ENCODE measurements at regions of chr11 and their contacts with region 1.

Region 1: DNA sequence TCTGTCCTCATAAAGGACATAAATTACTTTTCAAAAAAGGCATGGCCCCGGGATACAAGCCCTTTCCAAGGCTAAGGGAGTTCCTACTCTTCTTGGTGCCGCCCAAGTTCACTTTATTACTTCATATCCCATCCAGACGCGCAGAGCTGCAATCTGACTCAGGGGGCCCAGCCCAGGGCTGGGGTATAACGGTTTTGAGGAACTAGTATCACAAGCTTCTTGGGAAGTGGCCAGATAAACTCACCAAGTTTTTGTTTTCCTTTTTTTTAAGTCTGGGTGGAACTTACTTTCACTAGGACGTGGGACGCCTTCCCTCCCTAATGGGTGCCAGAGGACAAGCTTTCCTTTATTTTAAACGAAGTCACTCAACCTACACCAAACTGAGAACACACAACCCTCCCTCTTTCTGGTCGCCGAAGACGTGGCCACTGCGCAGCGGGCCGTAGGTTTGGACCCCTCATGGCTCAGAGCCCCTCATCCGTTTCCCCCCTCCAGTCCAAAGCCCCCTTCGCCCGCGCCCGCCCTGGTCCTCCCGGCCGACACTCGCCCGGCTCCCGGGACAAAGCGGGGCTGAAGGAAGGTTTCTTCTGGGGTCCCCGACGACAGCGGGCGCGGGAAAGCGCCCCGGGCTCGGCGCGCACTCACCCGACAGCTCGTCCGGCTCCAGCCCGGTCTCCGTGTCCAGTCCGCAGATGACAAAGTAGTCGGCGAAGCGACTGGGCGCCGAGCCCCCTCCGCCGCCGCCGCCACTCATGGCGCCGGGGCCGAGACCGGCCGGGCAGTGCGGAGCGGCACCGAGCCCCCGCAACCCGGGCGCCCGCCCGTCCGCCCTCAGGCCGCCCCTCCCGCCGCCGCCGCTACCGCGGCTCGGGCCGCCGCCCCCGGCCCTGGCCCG is 587 bp downstream of the DENND5A start:
- DNase-seq: no peak
- ATAC-seq: peak; percentile 61
- H3K4me3 ChIP-seq: peak overlapping the region; percentile 83 to 85
- H3K27ac ChIP-seq: peak overlapping the region; percentile 76
- H3K4me1 ChIP-seq: peaks cover 10 to 34% of the 10 kb centered on the region in 2 experiments
- H3K27me3 ChIP-seq: no peaks in the 10 kb centered on the region
- CTCF ChIP-seq: no peak
- POLR2A ChIP-seq: no peak
- RAD21 ChIP-seq: no peak

Region 2: GRCh38 chr11:9170450-9170849 is 94.1 kb before region 1 on chr11:
- CTCF ChIA-PET with region 1: no interaction called
- POLR2A ChIA-PET with region 1: no interaction called
- RAD21 ChIA-PET with region 1: no interaction called
- intact Hi-C with region 1: loop called (anchors 5 kb)
- DNase-seq: no peak
- ATAC-seq: no peak
- H3K4me3 ChIP-seq: no peak overlapping the region
- H3K27ac ChIP-seq: no peak overlapping the region
- H3K4me1 ChIP-seq: peaks cover 0 to 17% of the 10 kb centered on the region in 2 experiments; a peak in 2 of 4 replicates
- H3K27me3 ChIP-seq: no peaks in the 10 kb centered on the region
- CTCF ChIP-seq: no peak
- POLR2A ChIP-seq: no peak
- RAD21 ChIP-seq: no peak

Region 3: GRCh38 chr11:9534791-9535781 is 270.5 kb after region 1 on chr11:
- CTCF ChIA-PET with region 1: no interaction called
- POLR2A ChIA-PET with region 1: no interaction called
- RAD21 ChIA-PET with region 1: no interaction called
- intact Hi-C with region 1: no loop called
- DNase-seq: peak; percentile 44
- ATAC-seq: peak; percentile 78
- H3K4me3 ChIP-seq: no peak overlapping the region
- H3K27ac ChIP-seq: no peak overlapping the region
- H3K4me1 ChIP-seq: peaks cover 5 to 14% of the 10 kb centered on the region in 2 experiments; a peak in 3 of 4 replicates
- H3K27me3 ChIP-seq: no peaks in the 10 kb centered on the region
- CTCF ChIP-seq: peak; percentile 66 to 96 (median 95)
- POLR2A ChIP-seq: no peak
- RAD21 ChIP-seq: peak; percentile 73

Region 4: DNA sequence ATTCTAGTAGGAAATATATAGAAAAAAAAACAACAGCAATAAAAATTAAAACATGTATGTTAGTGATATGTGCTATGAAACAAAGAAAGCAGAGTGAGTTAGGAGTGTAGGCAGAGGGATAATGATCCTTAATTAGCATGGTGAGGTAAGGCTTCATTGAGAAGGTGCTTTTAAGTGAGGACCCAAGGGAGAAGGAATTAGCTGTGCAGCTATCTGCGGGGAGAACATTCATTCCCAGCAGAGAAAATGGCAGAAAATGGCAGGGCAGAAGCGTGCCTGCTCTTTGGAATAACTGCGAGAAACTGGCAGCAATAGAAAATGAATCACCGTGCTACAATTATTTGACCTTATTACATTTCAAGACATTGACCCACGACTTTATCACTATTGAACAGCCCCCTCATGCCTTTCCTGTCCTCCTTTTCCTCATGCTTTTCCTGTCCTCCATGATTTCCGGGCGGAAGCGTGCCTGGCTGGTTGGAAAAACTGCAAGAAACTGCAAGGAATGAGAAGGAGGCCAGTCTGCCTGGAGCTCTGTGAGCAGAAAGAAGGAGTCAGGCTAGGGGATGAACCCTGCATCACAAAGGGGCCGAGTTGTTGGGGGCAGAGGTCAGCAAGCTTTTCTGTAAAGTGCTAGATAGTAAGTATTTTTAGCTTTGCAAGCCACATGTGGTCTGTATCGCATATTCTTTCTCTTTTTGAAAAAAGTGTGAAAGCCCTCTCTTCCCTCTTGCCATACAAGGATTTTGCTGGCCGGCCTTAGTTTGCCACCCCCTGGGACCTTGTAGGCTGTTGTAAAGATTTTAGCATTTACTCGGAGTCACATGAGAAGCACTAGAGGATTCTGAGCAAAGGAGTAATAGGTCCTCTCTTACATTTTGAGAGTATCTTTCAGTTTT is 362.2 kb after region 1 on chr11:
- CTCF ChIA-PET with region 1: no interaction called
- POLR2A ChIA-PET with region 1: no interaction called
- RAD21 ChIA-PET with region 1: no interaction called
- intact Hi-C with region 1: no loop called
- DNase-seq: no peak
- ATAC-seq: no peak
- H3K4me3 ChIP-seq: no peak overlapping the region
- H3K27ac ChIP-seq: no peak overlapping the region
- H3K4me1 ChIP-seq: no peaks in the 10 kb centered on the region
- H3K27me3 ChIP-seq: no peaks in the 10 kb centered on the region
- CTCF ChIP-seq: no peak
- POLR2A ChIP-seq: no peak
- RAD21 ChIP-seq: no peak

Measured in HCT116 (cell line).